ENCODE measurements at regions of chr1 and their contacts with region 1.

Region 1: GRCh38 chr1:77683160-77684148 is 996 bp upstream of the ZZZ3 start:
- DNase-seq: peak; percentile 77
- ATAC-seq: peak; percentile 73
- H3K4me3 ChIP-seq: peak overlapping the region; percentile 82 to 97
- H3K27ac ChIP-seq: peak overlapping the region; percentile 96
- H3K4me1 ChIP-seq: peaks cover 6 to 35% of the 10 kb centered on the region in 2 experiments; a peak in 3 of 4 replicates
- H3K27me3 ChIP-seq: no peaks in the 10 kb centered on the region
- CTCF ChIP-seq: peak; percentile 36 to 78 (median 69); a peak in 5 of 6 replicates
- POLR2A ChIP-seq: peak; percentile 58
- RAD21 ChIP-seq: peak; percentile 61

Region 2: DNA sequence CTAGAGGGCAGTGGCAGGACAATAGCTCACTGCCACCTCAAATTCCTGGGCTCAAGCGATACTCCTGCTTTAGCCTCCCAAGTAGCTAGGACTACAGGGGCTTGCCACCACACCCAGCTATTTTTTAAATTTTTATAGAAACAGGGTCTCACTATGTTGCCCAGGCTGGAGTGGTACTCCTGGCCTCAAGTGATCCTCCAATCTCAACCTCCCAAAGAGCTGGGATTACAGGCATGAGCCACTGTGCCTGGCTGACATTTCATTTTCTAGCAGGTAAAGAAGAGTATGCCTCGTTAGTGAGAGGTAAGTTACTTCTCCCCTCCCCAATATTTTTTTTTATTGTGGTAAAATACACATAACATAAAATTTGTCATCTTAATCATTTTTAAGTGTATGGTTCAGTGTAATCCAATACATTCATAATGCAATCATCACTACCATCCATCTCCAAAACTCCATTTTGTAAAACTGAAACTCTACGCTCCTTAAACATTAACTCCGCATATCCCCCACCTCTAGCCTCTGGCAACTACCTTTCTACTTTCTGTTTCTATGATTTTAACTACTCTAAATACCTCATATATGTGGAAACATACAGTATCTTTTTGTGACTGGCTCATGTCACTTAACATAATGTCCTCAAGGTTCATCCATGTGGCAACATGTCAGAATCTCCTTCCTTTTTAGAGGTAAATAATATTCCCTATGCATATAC is 23.4 kb before region 1 on chr1:
- CTCF ChIA-PET with region 1: no interaction called
- POLR2A ChIA-PET with region 1: no interaction called
- RAD21 ChIA-PET with region 1: no interaction called
- intact Hi-C with region 1: no loop called
- DNase-seq: no peak
- ATAC-seq: no peak
- H3K4me3 ChIP-seq: no peak overlapping the region
- H3K27ac ChIP-seq: no peak overlapping the region
- H3K4me1 ChIP-seq: 0 out of 4 replicates have a peak, but pooled peaks cover 0 to 4% of the 10 kb centered on the region in 2 experiments
- H3K27me3 ChIP-seq: no peaks in the 10 kb centered on the region
- CTCF ChIP-seq: no peak
- POLR2A ChIP-seq: no peak
- RAD21 ChIP-seq: no peak

Region 3: DNA sequence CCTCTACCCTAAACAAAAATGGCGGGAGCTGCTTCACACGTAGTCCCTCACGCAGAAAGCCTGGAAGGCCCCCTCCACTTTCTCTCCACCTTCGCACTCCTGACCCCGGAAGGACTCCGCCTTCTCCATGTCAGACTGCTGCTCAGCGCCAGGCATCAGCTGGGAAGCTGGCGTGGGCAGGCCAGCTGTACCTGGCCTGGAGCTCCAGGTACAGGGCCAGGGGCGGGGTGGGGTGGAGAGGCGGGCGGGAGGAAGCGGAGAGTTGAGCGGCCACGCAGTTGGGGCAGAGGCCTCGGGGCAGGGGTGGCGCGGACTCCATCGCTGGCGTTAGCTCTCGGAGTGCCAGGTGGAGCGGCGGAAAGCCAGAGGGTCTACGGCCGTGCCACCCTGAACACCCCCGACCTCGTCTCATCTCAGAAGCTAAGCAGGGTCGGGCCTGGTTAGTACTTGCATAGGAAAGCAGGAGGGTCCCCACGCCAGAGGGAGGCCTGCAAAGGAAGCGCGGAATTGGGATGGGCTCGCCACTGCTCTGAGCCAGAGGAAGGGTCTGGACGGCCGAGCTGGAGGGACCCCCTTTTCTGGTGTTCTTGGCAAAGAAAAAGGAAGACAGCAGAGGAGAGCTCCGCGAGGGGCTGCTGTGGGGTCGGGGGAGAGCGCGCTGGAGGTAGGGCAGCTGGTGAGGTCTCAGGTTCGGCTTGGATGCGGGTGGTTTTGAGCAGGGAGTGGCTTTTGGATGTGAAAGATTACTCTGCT is 96.3 kb after region 1 on chr1 and contains the start of gene MIGA1:
- CTCF ChIA-PET with region 1: no interaction called
- POLR2A ChIA-PET with region 1: interaction called, 4 read pairs
- RAD21 ChIA-PET with region 1: no interaction called
- intact Hi-C with region 1: loop called (anchors 1 kb)
- DNase-seq: peak; percentile 85
- ATAC-seq: peak; percentile 97
- H3K4me3 ChIP-seq: peak within 1 kb of the TSS; percentile 76 to 97
- H3K27ac ChIP-seq: peak within 1 kb of the TSS; percentile 33
- H3K4me1 ChIP-seq: peaks cover 6 to 14% of the 10 kb centered on the region in 2 experiments; a peak in 3 of 4 replicates
- H3K27me3 ChIP-seq: no peaks in the 10 kb centered on the region
- CTCF ChIP-seq: no peak
- POLR2A ChIP-seq: peak; percentile 44
- RAD21 ChIP-seq: no peak
- total RNA-seq, gene MIGA1: 9.6 TPM

Region 4: DNA sequence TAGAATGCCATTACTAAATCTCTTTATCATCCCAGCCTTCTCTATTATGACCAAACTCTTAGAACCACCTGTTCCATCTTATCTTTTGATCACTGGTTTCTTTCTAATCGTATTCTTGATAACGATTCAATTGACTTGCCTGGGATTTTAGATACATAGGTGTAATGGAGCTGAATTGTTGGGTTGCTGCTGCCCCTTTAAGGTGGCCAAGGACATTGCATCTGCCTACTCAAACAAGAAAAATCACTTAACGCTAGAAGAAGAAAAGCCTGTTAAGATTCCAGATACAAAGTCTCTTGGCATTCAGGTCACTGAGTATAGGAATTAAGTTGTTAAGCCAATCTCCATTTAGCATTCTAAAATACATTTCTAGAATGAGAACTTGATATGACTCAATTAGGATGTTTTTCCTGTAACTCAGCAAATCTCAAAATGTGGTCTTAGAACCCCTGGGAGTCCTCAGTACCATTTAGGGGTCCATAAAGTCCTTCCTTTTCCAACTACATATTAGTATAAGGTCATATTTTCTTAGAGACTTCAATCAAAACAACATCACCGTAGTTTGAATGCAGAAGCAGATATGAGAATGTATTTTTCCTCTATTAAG is 217.3 kb after region 1 on chr1:
- CTCF ChIA-PET with region 1: no interaction called
- POLR2A ChIA-PET with region 1: no interaction called
- RAD21 ChIA-PET with region 1: no interaction called
- intact Hi-C with region 1: loop called (anchors 10 kb)
- DNase-seq: peak; percentile 53
- ATAC-seq: peak; percentile 90
- H3K4me3 ChIP-seq: no peak overlapping the region
- H3K27ac ChIP-seq: no peak overlapping the region
- H3K4me1 ChIP-seq: no peaks in the 10 kb centered on the region
- H3K27me3 ChIP-seq: no peaks in the 10 kb centered on the region
- CTCF ChIP-seq: peak; percentile 56 to 84 (median 73); a peak in 5 of 6 replicates
- POLR2A ChIP-seq: no peak
- RAD21 ChIP-seq: peak; percentile 82

Region 5: DNA sequence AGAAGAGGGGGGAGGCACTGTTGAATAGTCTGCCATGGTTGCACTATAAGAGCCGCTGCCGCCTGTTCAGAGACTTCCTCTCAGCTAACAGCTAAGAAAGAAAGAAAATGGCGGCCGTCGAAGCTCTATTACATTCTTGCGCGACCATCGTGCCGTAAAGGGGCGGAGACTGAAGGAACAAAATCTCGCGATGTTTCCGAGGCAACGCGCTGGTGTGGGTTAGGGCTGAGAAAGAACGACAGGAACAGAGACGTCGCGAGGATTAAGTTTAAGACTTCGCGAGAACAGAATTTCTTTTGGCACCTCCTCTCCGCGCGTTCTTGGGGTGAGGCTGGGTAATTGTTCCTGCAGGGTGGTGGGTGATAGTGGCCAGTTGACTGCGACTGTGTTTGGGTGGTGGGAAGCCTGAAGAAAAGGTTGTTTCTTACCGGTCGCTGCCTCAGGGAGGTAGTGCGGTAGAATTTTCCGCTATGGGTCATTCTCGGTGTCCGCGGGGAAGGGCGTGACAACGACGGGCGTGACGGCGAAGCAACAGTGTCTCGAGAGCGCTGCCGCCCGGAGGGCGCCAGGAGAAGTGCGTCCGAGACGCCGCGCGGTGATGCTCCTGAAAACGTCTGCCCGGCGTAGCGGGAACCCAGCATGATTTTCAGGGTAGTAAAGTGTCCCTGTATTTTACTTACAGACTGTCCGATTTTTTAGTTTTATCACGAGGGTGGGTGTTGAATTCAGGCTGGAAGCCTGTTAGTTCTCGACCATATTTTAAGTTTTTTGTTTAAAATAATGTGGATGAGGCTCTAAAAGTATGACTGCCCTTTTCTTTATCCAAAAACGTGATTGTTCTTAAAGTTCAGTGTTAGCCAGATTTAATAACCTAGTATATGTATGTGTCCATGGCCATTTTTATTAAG is 295.8 kb after region 1 on chr1 and contains the start of gene FUBP1:
- CTCF ChIA-PET with region 1: no interaction called
- POLR2A ChIA-PET with region 1: no interaction called
- RAD21 ChIA-PET with region 1: no interaction called
- intact Hi-C with region 1: loop called (anchors 5 kb)
- DNase-seq: peak; percentile 99
- ATAC-seq: peak; percentile 89
- H3K4me3 ChIP-seq: peak within 1 kb of the TSS; percentile 99
- H3K27ac ChIP-seq: peak within 1 kb of the TSS; percentile 80
- H3K4me1 ChIP-seq: peaks cover 12 to 20% of the 10 kb centered on the region in 2 experiments
- H3K27me3 ChIP-seq: no peaks in the 10 kb centered on the region
- CTCF ChIP-seq: peak; percentile 48 to 56 (median 50); a peak in 5 of 6 replicates
- POLR2A ChIP-seq: peak; percentile 91
- RAD21 ChIP-seq: peak; percentile 47; the same call in 1 of the 2 replicates
- total RNA-seq, gene FUBP1: 125 TPM